ENCODE measurements at regions of chr5 and their contacts with region 1.

Region 1: DNA sequence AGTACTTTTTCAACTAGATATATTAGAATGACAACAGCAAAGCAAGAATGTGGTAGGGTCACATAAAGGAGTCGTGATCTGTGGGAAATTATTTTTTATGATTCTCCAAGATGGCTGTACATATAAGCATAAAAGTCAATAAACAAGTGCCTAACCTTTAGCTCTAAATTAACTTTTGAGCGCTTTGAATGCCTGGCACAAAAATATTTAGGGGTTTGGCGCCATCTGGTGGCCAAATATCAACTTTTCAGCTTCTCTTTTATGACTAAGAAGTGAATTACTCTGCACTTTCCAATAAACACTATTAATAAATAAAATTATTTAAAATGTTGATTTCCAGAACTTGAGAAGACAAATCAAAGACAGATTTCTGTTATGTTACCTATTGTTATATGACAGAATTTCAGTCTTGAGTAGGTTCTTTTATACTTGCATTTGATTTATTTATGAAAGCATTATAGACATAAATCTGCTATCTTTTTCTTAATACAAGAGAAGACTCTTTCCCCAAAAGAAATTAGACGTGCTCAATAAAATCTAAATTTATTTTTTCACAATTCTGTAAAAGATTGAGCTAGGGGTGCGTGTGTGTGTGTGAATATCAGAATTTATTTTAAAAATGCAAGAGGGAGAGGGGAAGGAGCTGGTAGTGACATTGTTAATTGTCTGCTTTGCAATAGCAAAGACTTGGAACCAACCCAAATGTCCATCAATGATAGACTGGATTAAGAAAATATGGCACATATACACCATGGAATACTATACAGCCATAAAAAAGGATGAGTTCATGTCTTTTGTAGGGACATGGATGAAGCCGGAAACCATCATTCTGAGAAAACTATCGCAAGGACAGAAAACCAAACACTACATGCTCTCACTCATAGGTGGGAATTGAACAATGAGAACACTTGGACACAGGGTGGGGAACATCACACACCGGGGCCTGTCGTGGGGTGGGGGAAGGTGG is 36.7 kb upstream of the ARRDC3 start:
- DNase-seq: peak; percentile 10 to 24
- ATAC-seq: peak in 1 of 2 donors; percentile 55
- H3K4me3 ChIP-seq: no peak overlapping the region
- H3K27ac ChIP-seq: no peak overlapping the region
- H3K4me1 ChIP-seq: no peaks in the 10 kb centered on the region
- H3K27me3 ChIP-seq: no peaks in the 10 kb centered on the region
- CTCF ChIP-seq: peak; percentile 62 to 79 (median 68)
- POLR2A ChIP-seq: no peak

Region 2: GRCh38 chr5:90866333-90866732 is 553.5 kb before region 1 on chr5:
- in situ Hi-C with region 1: loop called in 3 of 4 experiments (anchors 10 to 25 kb)
- intact Hi-C with region 1: loop called (anchors 1 kb)
- DNase-seq: no peak
- ATAC-seq: peak in 1 of 2 donors; percentile 49
- H3K4me3 ChIP-seq: no peak overlapping the region
- H3K27ac ChIP-seq: no peak overlapping the region
- H3K4me1 ChIP-seq: peaks cover 0 to 27% of the 10 kb centered on the region in 2 donors
- H3K27me3 ChIP-seq: no peaks in the 10 kb centered on the region
- CTCF ChIP-seq: peak in 4 of 5 experiments; percentile 36 to 50 (median 46)
- POLR2A ChIP-seq: no peak

Measured in gastrocnemius medialis (tissue), 4 donors.